Activated B cell treated with CpG ODN at 0.5 μM for 24 hours (primary cell): ENCODE measurements at regions of chr3 and their contacts with region 1.

Region 1: DNA sequence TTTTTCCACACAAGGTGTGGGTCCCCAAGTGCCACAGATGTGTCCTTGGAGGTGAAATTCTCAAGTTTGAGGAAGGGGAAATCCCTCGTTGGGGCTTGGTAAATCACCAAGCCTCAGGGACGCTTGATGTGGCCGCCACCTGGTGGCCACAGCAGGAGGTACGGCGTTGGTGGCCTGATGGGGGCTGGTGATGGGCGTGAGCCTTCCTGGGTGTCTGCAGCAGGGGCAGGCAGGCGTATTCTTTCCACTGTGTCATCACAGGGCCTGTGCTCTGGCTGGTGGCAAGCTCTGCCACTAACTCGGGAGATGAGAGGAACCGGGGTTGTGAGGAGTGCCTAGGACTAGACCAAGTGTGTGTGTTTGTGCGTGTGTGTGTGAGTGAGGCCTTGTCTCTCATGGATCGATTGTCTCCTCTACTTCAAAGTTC is 4.2 kb downstream of the ACOX2 start:
- DNase-seq: peak; percentile 75
- ATAC-seq: peak; percentile 100
- H3K4me3 Mint-ChIP-seq: no peak overlapping the region
- H3K27ac Mint-ChIP-seq: no peak overlapping the region
- H3K4me1 Mint-ChIP-seq: peaks cover 7% of the 10 kb centered on the region
- H3K27me3 Mint-ChIP-seq: no peaks in the 10 kb centered on the region
- CTCF ChIP-seq: no peak

Region 2: GRCh38 chr3:58188173-58188564 is 344.6 kb before region 1 on chr3:
- CTCF ChIA-PET with region 1: no interaction called
- POLR2A ChIA-PET with region 1: no interaction called
- intact Hi-C with region 1: loop called (anchors 1 kb)
- DNase-seq: no peak
- ATAC-seq: peak; percentile 18
- H3K4me3 Mint-ChIP-seq: no peak overlapping the region
- H3K27ac Mint-ChIP-seq: peak overlapping the region; percentile 61
- H3K4me1 Mint-ChIP-seq: peaks cover 7% of the 10 kb centered on the region
- H3K27me3 Mint-ChIP-seq: no peaks in the 10 kb centered on the region
- CTCF ChIP-seq: no peak

Region 3: GRCh38 chr3:58414538-58415197 is 118.1 kb before region 1 on chr3:
- CTCF ChIA-PET with region 1: interaction called, 4 read pairs
- POLR2A ChIA-PET with region 1: no interaction called
- intact Hi-C with region 1: loop called (anchors 1 kb)
- DNase-seq: no peak
- ATAC-seq: peak; percentile 81
- H3K4me3 Mint-ChIP-seq: no peak overlapping the region
- H3K27ac Mint-ChIP-seq: no peak overlapping the region
- H3K4me1 Mint-ChIP-seq: peaks cover 48% of the 10 kb centered on the region
- H3K27me3 Mint-ChIP-seq: no peaks in the 10 kb centered on the region
- CTCF ChIP-seq: peak; percentile 55

Region 4: DNA sequence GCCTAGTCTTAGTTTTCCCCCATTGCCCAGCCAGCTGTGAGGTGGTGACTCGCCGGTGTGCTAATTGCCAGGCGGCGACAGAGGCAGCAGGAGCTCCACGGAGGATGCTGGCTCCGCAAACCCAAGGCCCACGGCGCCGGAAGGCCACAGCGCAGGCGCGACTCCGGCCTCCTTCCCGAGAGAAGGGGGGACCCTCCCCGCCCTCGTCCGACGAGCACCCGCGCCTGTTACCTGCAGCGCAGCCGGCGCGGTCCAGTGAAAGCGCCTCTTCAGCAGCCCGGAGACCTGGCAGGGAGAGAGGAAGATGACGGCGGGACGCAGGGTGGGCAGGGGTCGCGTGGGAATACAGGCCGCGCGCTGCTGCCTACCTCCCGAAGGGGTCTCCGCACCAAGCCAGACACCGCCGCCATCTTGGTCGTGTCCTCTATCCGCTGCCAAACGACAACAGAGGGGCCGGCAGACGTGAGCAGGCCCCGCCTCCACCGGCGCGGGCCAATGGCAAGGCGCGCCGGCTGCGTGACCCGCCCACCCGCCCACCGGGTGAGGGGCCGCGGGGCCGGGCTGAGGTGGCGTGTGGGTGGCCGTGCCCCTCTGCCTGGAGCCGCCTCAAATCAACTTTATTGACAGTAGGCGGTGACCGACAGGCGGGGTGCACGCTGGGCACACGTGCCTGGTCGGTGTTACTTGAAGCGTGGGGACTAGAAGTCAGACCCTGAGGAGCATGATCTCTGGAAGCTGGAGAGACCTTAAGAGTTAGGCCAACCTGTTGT is 99.2 kb before region 1 on chr3 and contains the start of gene PDHB:
- CTCF ChIA-PET with region 1: no interaction called
- POLR2A ChIA-PET with region 1: no interaction called
- intact Hi-C with region 1: loop called (anchors 1 kb)
- DNase-seq: peak; percentile 86
- ATAC-seq: peak; percentile 95
- H3K4me3 Mint-ChIP-seq: peak within 1 kb of the TSS; percentile 95
- H3K27ac Mint-ChIP-seq: peak within 1 kb of the TSS; percentile 95
- H3K4me1 Mint-ChIP-seq: peaks cover 27% of the 10 kb centered on the region
- H3K27me3 Mint-ChIP-seq: no peaks in the 10 kb centered on the region
- CTCF ChIP-seq: no peak
- total RNA-seq, gene PDHB: 63.0 and 67.3 TPM in 2 replicates

Region 5: GRCh38 chr3:58463181-58463941 is 69.4 kb before region 1 on chr3:
- CTCF ChIA-PET with region 1: interaction called, 7 read pairs
- POLR2A ChIA-PET with region 1: no interaction called
- intact Hi-C with region 1: loop called (anchors 1 kb)
- DNase-seq: peak; percentile 41
- ATAC-seq: peak; percentile 96
- H3K4me3 Mint-ChIP-seq: peak overlapping the region; percentile 47
- H3K27ac Mint-ChIP-seq: no peak overlapping the region
- H3K4me1 Mint-ChIP-seq: peaks cover 10% of the 10 kb centered on the region
- H3K27me3 Mint-ChIP-seq: no peaks in the 10 kb centered on the region
- CTCF ChIP-seq: peak; percentile 37